Panc1 (cell line): ENCODE measurements at regions of chr16 and their contacts with region 1.

Region 1: GRCh38 chr16:51048544-51048943 is 102.5 kb downstream of the SALL1 start:
- DNase-seq: no peak
- ATAC-seq: no peak
- H3K4me3 ChIP-seq: no peak overlapping the region
- H3K27ac ChIP-seq: no peak overlapping the region
- H3K4me1 ChIP-seq: no peaks in the 10 kb centered on the region
- H3K27me3 ChIP-seq: no peaks in the 10 kb centered on the region
- CTCF ChIP-seq: no peak

Region 2: GRCh38 chr16:50259334-50260205 is 789.0 kb before region 1 on chr16:
- CTCF ChIA-PET with region 1: no interaction called
- POLR2A ChIA-PET with region 1: no interaction called
- in situ Hi-C with region 1: no loop called
- intact Hi-C with region 1: loop called (anchors 10 kb)
- DNase-seq: no peak
- ATAC-seq: peak; percentile 33; the same call in 1 of the 2 replicates
- H3K4me3 ChIP-seq: no peak overlapping the region
- H3K27ac ChIP-seq: no peak overlapping the region
- H3K4me1 ChIP-seq: no peaks in the 10 kb centered on the region
- H3K27me3 ChIP-seq: no peaks in the 10 kb centered on the region
- CTCF ChIP-seq: no peak

Region 3: DNA sequence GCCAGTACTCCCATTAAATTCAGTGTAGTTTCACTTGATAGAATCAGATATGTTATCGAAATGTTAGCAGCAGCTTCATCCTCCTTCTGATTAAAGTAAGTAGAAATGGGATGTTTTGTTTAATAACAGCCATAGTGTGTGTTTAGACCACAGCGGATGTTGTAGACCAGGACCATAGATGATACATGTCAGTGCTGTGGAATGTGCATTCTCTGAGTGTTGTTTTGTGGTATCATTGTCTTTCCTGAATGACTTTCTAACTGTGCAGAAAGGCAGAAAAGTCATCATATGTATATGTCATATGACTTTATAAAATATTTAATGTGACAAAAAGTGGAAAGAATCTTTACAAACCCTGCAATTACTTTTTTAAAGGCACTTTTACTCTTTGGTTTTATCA is 251.1 kb before region 1 on chr16:
- CTCF ChIA-PET with region 1: no interaction called
- POLR2A ChIA-PET with region 1: no interaction called
- in situ Hi-C with region 1: no loop called
- intact Hi-C with region 1: no loop called
- DNase-seq: no peak
- ATAC-seq: no peak
- H3K4me3 ChIP-seq: no peak overlapping the region
- H3K27ac ChIP-seq: no peak overlapping the region
- H3K4me1 ChIP-seq: no peaks in the 10 kb centered on the region
- H3K27me3 ChIP-seq: no peaks in the 10 kb centered on the region
- CTCF ChIP-seq: no peak

Region 4: DNA sequence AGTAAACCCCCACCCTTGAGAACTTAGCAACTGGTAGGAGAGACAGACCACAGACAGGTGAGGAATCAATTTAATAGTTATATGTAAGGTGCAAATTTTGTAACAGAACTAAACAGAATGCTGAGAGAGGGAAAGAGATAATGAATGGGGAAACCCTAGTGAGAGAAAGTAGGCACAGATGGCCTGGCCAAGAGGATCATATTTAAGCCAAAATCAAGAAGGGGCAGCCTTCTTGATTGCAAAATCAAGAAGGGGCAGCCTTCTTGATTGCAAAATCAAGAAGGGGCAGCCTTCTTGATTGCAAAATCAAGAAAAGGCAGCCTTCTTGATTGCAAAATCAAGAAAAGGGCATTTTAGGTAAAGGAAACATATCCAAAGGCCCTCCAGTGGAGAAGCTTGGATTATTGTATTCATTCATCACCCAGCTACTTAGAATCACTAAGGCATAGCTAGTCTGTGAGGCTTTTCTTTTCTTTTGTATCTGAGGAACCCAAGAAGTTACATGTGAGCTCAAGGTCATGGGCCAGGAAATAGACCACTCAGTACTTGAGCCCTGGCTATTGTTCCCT is 116.1 kb before region 1 on chr16:
- CTCF ChIA-PET with region 1: no interaction called
- POLR2A ChIA-PET with region 1: no interaction called
- in situ Hi-C with region 1: no loop called
- intact Hi-C with region 1: no loop called
- DNase-seq: no peak
- ATAC-seq: no peak
- H3K4me3 ChIP-seq: no peak overlapping the region
- H3K27ac ChIP-seq: no peak overlapping the region
- H3K4me1 ChIP-seq: no peaks in the 10 kb centered on the region
- H3K27me3 ChIP-seq: no peaks in the 10 kb centered on the region; the same call in 1 of the 2 replicates
- CTCF ChIP-seq: no peak

Region 5: GRCh38 chr16:51163894-51164566 is 115.5 kb after region 1 on chr16:
- CTCF ChIA-PET with region 1: no interaction called
- POLR2A ChIA-PET with region 1: no interaction called
- in situ Hi-C with region 1: no loop called
- intact Hi-C with region 1: no loop called
- DNase-seq: no peak
- ATAC-seq: no peak
- H3K4me3 ChIP-seq: no peak overlapping the region
- H3K27ac ChIP-seq: no peak overlapping the region
- H3K4me1 ChIP-seq: no peaks in the 10 kb centered on the region
- H3K27me3 ChIP-seq: no peaks in the 10 kb centered on the region
- CTCF ChIP-seq: no peak